Activated CD8-positive, alpha-beta T cell treated with anti-CD3 and anti-CD28 coated beads for 36 hours (primary cell): ENCODE measurements at regions of chr3 and their contacts with region 1.

Region 1: DNA sequence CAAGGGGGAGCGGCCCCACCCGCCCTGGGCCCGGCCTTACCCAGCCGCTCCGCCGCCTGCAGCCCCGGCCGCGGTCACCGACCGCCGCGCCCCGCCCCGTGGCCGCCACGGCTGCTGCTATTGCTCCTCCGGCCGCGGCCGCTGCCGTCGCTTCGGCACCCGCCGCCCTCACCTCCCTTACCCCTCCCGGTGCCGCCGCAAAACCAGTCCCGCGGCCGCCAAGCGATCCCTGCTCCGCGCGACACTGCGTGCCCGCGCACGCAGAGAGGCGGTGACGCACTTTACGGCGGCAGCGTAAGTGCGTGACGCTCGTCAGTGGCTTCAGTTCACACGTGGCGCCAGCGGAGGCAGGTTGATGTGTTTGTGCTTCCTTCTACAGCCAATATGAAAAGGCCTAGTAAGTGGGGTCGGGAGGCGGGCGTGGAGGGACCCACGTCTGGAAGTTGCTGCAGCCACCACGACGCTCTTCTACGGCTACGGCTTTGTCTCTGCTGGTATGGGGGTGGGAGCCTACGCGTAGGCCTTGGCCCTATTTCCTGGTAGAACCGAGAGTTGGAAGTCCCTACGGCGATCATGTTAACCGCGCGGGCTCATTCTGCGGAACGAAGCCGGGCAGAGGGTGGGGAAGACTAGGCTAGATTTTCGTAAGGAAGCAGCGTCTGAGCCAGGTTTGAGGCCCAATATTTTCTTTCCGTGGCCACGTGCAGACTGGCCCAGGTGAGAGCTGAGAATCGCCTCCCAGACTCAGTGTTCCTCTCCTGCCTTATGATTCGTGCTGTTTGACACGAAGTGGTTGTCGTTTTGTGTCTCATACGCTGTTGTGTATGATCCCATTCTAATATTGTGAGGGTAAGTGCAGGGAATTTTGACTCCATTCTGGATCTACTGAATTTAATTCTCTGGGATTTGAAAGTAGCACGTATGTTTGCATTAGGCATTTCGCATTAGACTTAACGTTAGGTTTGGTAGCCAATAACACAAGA is at the starts of genes GNL3 and PBRM1:
- DNase-seq: peak; percentile 95
- ATAC-seq: peak; percentile 87
- H3K4me3 Mint-ChIP-seq: peak within 1 kb of the TSS; percentile 100
- H3K27ac Mint-ChIP-seq: peak within 1 kb of the TSS; percentile 99
- H3K4me1 Mint-ChIP-seq: peaks cover 70% of the 10 kb centered on the region
- H3K27me3 Mint-ChIP-seq: no peaks in the 10 kb centered on the region
- CTCF ChIP-seq: no peak
- total RNA-seq, gene GNL3: 198 to 200 TPM
- total RNA-seq, gene PBRM1: 55.9 to 56.1 TPM

Region 2: GRCh38 chr3:52536369-52537164 is 149.4 kb before region 1 on chr3 and contains the start of gene UQCC5:
- CTCF ChIA-PET with region 1: no interaction called
- POLR2A ChIA-PET with region 1: interaction called, 3 read pairs
- intact Hi-C with region 1: loop called (anchors 10 kb)
- DNase-seq: peak; percentile 99
- ATAC-seq: peak; percentile 88
- H3K4me3 Mint-ChIP-seq: peak within 1 kb of the TSS; percentile 100
- H3K27ac Mint-ChIP-seq: peak within 1 kb of the TSS; percentile 99
- H3K4me1 Mint-ChIP-seq: peaks cover 49% of the 10 kb centered on the region
- H3K27me3 Mint-ChIP-seq: no peaks in the 10 kb centered on the region
- CTCF ChIP-seq: no peak
- total RNA-seq, gene UQCC5: 14.0 to 20.5 TPM

Region 3: GRCh38 chr3:52696830-52697621 is 11.0 kb after region 1 on chr3:
- CTCF ChIA-PET with region 1: interaction called, 5 read pairs
- POLR2A ChIA-PET with region 1: interaction called, 15 read pairs
- intact Hi-C with region 1: no loop called
- DNase-seq: no peak
- ATAC-seq: no peak
- H3K4me3 Mint-ChIP-seq: no peak overlapping the region
- H3K27ac Mint-ChIP-seq: peak overlapping the region; percentile 81
- H3K4me1 Mint-ChIP-seq: peaks cover 37% of the 10 kb centered on the region
- H3K27me3 Mint-ChIP-seq: no peaks in the 10 kb centered on the region
- CTCF ChIP-seq: no peak

Region 4: GRCh38 chr3:52705688-52706686 is 20.0 kb after region 1 on chr3 and contains the starts of genes GLT8D1 and SPCS1:
- CTCF ChIA-PET with region 1: interaction called, 5 read pairs
- POLR2A ChIA-PET with region 1: interaction called, 101 read pairs
- intact Hi-C with region 1: loop called (anchors 2 kb)
- DNase-seq: peak; percentile 88
- ATAC-seq: peak; percentile 93
- H3K4me3 Mint-ChIP-seq: peak within 1 kb of the TSS; percentile 97
- H3K27ac Mint-ChIP-seq: peak within 1 kb of the TSS; percentile 91
- H3K4me1 Mint-ChIP-seq: peaks cover 29% of the 10 kb centered on the region
- H3K27me3 Mint-ChIP-seq: no peaks in the 10 kb centered on the region
- CTCF ChIP-seq: no peak
- total RNA-seq, gene GLT8D1: 34.0 to 35.0 TPM
- total RNA-seq, gene SPCS1: 116 to 120 TPM

Region 5: DNA sequence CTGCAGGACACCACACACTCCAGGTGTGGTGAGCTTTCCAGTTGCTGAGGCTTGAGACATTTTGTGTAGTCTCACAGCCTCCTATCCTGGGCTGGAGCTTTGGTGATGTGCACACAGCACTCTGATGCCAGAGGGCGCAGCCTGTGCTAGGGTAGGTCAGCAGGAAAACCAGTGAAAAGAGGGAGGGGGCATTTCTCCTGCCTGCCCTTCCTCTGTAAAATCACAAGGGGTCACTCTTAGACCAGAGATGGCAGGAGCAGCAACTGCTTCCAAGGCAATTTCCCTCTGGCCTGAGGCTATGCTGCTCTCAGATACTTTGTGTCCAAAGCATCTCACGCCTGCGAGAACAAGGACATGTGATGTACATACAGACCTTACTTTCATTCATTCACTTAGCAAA is 165.3 kb after region 1 on chr3:
- CTCF ChIA-PET with region 1: no interaction called
- POLR2A ChIA-PET with region 1: no interaction called
- intact Hi-C with region 1: no loop called
- DNase-seq: peak; percentile 37
- ATAC-seq: peak; percentile 90
- H3K4me3 Mint-ChIP-seq: no peak overlapping the region
- H3K27ac Mint-ChIP-seq: no peak overlapping the region
- H3K4me1 Mint-ChIP-seq: no peaks in the 10 kb centered on the region
- H3K27me3 Mint-ChIP-seq: no peaks in the 10 kb centered on the region
- CTCF ChIP-seq: peak; percentile 64

Region 6: DNA sequence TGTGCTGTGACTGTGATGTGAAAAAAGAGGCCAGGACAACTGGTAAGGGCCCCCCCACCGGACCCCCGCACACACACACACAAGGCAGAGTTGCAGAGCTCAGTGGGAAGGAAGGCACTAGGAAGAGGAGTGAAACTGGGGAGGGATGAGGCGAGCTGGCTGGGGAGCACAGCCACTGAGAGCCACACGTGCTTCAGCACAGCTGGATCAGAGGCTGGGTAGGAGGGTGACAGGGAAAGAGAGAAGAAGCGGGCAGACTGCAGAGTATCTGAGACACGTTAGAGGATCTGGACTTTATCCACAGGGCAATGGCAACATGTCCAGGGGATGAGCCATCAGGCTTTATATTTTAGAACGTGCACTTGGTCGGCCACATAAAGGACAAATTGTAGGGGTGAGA is 607.9 kb after region 1 on chr3:
- CTCF ChIA-PET with region 1: no interaction called
- POLR2A ChIA-PET with region 1: no interaction called
- intact Hi-C with region 1: no loop called
- DNase-seq: no peak
- ATAC-seq: no peak
- H3K4me3 Mint-ChIP-seq: no peak overlapping the region
- H3K27ac Mint-ChIP-seq: peak overlapping the region; percentile 4
- H3K4me1 Mint-ChIP-seq: no peaks in the 10 kb centered on the region
- H3K27me3 Mint-ChIP-seq: no peaks in the 10 kb centered on the region
- CTCF ChIP-seq: no peak